CD8-positive, alpha-beta T cell (primary cell): ENCODE measurements at regions of chr16 and their contacts with region 1.

Region 1: GRCh38 chr16:9090960-9091866 is at the start of gene HAPSTR1:
- DNase-seq: peak; percentile 98 to 100 (median 99)
- ATAC-seq: peak; percentile 85
- H3K4me3 ChIP-seq: peak within 1 kb of the TSS; percentile 85 to 93
- H3K4me3 Mint-ChIP-seq: peak within 1 kb of the TSS; percentile 99
- H3K27ac ChIP-seq: peak within 1 kb of the TSS; percentile 82 to 92
- H3K27ac Mint-ChIP-seq: peak within 1 kb of the TSS; percentile 99
- H3K4me1 ChIP-seq: peaks cover 37% of the 10 kb centered on the region
- H3K4me1 Mint-ChIP-seq: peaks cover 34% of the 10 kb centered on the region
- H3K27me3 ChIP-seq: no peaks in the 10 kb centered on the region
- H3K27me3 Mint-ChIP-seq: no peaks in the 10 kb centered on the region
- CTCF ChIP-seq: no peak
- total RNA-seq, gene HAPSTR1: 189 to 191 TPM

Region 2: GRCh38 chr16:8797364-8798173 is 293.6 kb before region 1 on chr16 and contains the starts of genes PMM2 and TMEM186:
- CTCF ChIA-PET with region 1: no interaction called
- POLR2A ChIA-PET with region 1: interaction called, 4 read pairs
- intact Hi-C with region 1: loop called in 1 of 2 experiments (anchors 5 kb)
- DNase-seq: peak; percentile 87 to 98 (median 95)
- ATAC-seq: peak; percentile 95
- H3K4me3 ChIP-seq: peak within 1 kb of the TSS; percentile 77 to 97
- H3K4me3 Mint-ChIP-seq: peak within 1 kb of the TSS; percentile 95
- H3K27ac ChIP-seq: peak within 1 kb of the TSS; percentile 78 to 81
- H3K27ac Mint-ChIP-seq: peak within 1 kb of the TSS; percentile 93
- H3K4me1 ChIP-seq: peaks cover 34% of the 10 kb centered on the region
- H3K4me1 Mint-ChIP-seq: peaks cover 46% of the 10 kb centered on the region
- H3K27me3 ChIP-seq: no peaks in the 10 kb centered on the region
- H3K27me3 Mint-ChIP-seq: no peaks in the 10 kb centered on the region
- CTCF ChIP-seq: no peak
- total RNA-seq, gene PMM2: 29.6 to 32.7 TPM
- total RNA-seq, gene TMEM186: 2.4 to 2.9 TPM

Region 3: DNA sequence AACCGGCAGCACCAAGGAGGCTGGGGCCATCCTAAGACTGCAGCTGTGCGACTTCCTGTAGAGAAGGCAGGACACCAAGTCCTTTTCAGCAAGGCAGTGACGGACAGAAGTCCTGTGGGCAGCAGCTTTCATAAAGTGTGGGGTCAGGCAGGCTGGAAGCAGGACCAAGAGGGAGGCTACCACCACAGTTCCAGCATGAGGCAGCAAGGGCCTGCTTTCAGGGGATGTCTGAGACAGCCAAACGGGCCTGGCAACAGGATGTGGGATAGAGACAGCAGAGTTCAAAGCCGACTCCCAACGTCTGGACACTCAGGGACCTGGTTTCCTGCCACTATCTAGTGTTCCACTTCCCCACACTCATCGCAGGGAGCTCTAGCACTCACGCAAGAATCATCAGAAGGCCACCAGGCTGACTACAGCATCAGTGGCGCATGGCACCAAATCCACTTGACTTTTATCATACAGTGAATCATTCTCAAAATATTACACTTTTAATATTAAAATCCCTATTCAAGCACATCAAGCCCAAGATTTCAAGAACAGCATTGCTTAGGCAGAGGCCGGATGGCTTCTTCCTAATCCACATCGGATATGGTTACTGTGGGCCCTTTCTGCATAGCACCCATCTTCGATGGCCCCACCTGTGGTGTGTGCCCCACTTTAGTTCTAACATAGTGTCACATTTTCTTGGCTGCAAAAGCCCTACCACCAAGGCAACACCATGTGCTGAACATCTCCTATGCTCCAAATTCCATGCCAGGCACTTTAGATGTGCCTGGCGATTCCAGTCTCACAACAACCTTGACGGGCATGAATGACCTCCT is 132.7 kb before region 1 on chr16:
- CTCF ChIA-PET with region 1: no interaction called
- POLR2A ChIA-PET with region 1: interaction called, 12 read pairs
- intact Hi-C with region 1: loop called in 1 of 2 experiments (anchors 1 kb)
- DNase-seq: peak in 5 of 9 experiments; percentile 17 to 62 (median 38)
- ATAC-seq: no peak
- H3K4me3 ChIP-seq: peak overlapping the region; percentile 24 to 25
- H3K4me3 Mint-ChIP-seq: peak overlapping the region; percentile 75
- H3K27ac ChIP-seq: peak overlapping the region; percentile 9 to 76
- H3K27ac Mint-ChIP-seq: peak overlapping the region; percentile 88
- H3K4me1 ChIP-seq: peaks cover 70% of the 10 kb centered on the region
- H3K4me1 Mint-ChIP-seq: peaks cover 77% of the 10 kb centered on the region
- H3K27me3 ChIP-seq: no peaks in the 10 kb centered on the region
- H3K27me3 Mint-ChIP-seq: no peaks in the 10 kb centered on the region
- CTCF ChIP-seq: no peak

Region 4: DNA sequence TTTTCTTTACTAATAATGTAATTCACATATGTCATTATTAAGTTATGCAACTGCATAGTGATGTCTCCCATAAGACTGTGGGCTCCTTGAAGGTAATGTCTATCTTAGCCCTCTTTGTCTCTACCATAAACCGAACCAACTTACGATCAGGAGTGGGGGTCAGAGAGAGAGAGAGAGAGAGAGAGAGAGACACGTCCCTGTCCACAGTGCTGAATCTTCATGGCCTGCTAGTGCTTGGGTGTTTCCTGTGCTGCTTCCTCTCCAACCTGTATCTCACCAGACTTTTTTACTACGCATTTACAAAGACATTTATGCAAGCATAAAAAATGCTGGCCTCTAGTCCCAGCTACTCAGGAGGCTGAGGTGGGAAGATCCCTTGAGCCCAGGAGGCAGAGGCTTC is 52.0 kb before region 1 on chr16:
- CTCF ChIA-PET with region 1: no interaction called
- POLR2A ChIA-PET with region 1: no interaction called
- intact Hi-C with region 1: loop called in 1 of 2 experiments (anchors 5 kb)
- DNase-seq: peak in 1 of 9 experiments; percentile 36
- ATAC-seq: no peak
- H3K4me3 ChIP-seq: no peak overlapping the region
- H3K4me3 Mint-ChIP-seq: no peak overlapping the region
- H3K27ac ChIP-seq: no peak overlapping the region
- H3K27ac Mint-ChIP-seq: no peak overlapping the region
- H3K4me1 ChIP-seq: no peaks in the 10 kb centered on the region
- H3K4me1 Mint-ChIP-seq: no peaks in the 10 kb centered on the region
- H3K27me3 ChIP-seq: no peaks in the 10 kb centered on the region
- H3K27me3 Mint-ChIP-seq: peaks cover 2% of the 10 kb centered on the region
- CTCF ChIP-seq: no peak

Region 5: DNA sequence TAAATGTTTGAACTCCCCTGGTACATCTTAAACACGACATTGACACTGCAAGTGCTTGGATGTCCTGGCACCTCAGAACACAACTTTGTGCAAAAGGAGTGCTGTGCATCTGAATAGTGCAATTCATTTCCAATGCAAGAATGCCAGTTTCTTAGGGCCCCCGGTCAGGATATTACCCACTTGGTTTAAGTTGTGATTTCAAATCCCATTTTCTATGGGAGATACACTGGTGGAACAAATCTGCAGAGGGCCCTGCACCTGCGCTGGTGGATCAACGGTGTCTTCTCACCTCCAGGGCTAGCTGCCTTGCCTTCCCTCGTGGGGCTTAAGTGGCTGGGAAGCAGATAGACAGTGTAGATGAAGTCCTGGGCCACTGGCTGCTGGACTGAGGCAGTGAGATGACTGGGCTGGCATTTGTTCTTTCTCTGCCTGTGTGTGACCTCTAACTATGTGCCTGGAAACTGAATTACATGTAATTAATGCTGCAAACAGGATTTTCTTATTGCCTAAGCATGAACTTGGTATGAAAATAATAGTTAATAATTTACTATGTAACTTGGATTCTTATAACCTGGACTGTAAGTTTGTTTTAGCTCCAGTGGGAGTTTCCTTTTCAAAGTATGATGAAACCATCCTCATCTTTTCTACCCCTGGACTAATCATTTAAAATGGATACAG is 21.1 kb after region 1 on chr16:
- CTCF ChIA-PET with region 1: no interaction called
- POLR2A ChIA-PET with region 1: interaction called, 5 read pairs
- intact Hi-C with region 1: loop called in 1 of 2 experiments (anchors 2 kb)
- DNase-seq: no peak
- ATAC-seq: no peak
- H3K4me3 ChIP-seq: no peak overlapping the region
- H3K4me3 Mint-ChIP-seq: peak overlapping the region; percentile 52
- H3K27ac ChIP-seq: peak overlapping the region in 1 of 2 experiments; percentile 41
- H3K27ac Mint-ChIP-seq: peak overlapping the region; percentile 68
- H3K4me1 ChIP-seq: peaks cover 78% of the 10 kb centered on the region
- H3K4me1 Mint-ChIP-seq: peaks cover 94% of the 10 kb centered on the region
- H3K27me3 ChIP-seq: no peaks in the 10 kb centered on the region
- H3K27me3 Mint-ChIP-seq: no peaks in the 10 kb centered on the region
- CTCF ChIP-seq: no peak

Region 6: DNA sequence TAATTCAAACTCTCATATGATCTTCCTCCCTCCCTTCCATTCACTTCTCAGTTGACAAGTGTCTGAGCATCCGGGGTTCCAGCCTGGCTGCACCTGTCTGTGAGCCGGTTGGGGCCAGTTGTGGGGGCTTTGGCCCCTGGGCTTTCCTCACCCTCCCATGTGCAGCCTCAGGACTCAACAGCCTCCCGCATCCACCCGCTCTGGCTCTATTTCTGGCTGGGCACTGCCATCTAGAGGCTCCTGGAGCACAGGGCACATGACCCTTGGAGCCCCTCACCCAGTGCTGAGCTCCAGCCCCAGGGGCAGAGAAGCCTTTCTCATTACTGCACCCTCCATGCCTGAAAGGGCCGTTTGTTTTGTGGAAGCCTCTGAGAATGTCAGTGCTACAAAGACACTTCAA is 43.5 kb after region 1 on chr16:
- CTCF ChIA-PET with region 1: no interaction called
- POLR2A ChIA-PET with region 1: interaction called, 8 read pairs
- intact Hi-C with region 1: loop called (anchors 2 to 5 kb)
- DNase-seq: peak; percentile 32 to 76 (median 64)
- ATAC-seq: peak; percentile 80
- H3K4me3 ChIP-seq: no peak overlapping the region
- H3K4me3 Mint-ChIP-seq: no peak overlapping the region
- H3K27ac ChIP-seq: no peak overlapping the region
- H3K27ac Mint-ChIP-seq: peak overlapping the region; percentile 55
- H3K4me1 ChIP-seq: peaks cover 13% of the 10 kb centered on the region
- H3K4me1 Mint-ChIP-seq: peaks cover 20% of the 10 kb centered on the region
- H3K27me3 ChIP-seq: no peaks in the 10 kb centered on the region
- H3K27me3 Mint-ChIP-seq: no peaks in the 10 kb centered on the region
- CTCF ChIP-seq: peak; percentile 68